PC-9 (cell line): ENCODE measurements at regions of chr5 and their contacts with region 1.

Region 1: DNA sequence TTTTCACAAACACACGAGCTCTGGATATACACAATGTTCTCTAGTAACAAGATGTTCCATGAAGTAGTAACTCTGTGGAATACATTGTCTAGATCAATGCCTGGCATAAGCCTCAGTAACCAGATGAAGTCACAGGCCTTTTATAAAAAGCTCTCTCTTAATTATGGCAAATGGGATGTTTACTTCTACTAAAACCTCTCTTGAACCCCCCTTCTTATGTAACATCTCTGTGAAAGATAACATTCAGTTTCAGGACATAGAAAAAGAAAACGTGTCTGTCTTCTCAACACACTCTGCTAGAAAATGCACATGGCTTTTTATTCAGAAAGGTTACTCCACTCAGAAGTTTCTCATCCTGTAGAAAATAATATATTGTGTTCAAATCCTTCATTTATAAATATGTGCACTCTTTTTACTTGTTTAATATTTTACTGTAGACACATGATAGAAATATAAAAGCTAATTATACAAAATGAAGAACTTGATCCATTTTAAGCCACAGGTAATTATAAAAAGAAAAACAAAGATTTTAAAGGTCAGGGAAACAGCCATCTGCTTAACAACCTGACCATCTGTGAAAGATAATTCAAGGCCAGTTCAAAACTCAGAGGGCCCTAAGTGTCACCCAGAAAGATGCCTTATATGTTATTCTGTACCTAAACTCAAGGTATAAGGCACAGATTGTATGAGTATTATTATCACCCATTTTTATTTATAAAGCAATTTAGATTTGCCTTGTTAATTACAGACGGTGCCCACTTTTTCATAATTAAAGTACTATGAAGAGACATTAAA is 812.0 kb downstream of the CDH18 start:
- DNase-seq: no peak
- H3K4me3 ChIP-seq: no peak overlapping the region
- H3K27ac ChIP-seq: no peak overlapping the region
- H3K4me1 ChIP-seq: no peaks in the 10 kb centered on the region
- H3K27me3 ChIP-seq: no peaks in the 10 kb centered on the region
- CTCF ChIP-seq: no peak

Region 2: GRCh38 chr5:19122923-19123322 is 53.0 kb before region 1 on chr5:
- CTCF ChIA-PET with region 1: no interaction called
- POLR2A ChIA-PET with region 1: no interaction called
- intact Hi-C with region 1: no loop called
- DNase-seq: no peak
- H3K4me3 ChIP-seq: no peak overlapping the region
- H3K27ac ChIP-seq: no peak overlapping the region
- H3K4me1 ChIP-seq: no peaks in the 10 kb centered on the region
- H3K27me3 ChIP-seq: no peaks in the 10 kb centered on the region
- CTCF ChIP-seq: no peak

Region 3: DNA sequence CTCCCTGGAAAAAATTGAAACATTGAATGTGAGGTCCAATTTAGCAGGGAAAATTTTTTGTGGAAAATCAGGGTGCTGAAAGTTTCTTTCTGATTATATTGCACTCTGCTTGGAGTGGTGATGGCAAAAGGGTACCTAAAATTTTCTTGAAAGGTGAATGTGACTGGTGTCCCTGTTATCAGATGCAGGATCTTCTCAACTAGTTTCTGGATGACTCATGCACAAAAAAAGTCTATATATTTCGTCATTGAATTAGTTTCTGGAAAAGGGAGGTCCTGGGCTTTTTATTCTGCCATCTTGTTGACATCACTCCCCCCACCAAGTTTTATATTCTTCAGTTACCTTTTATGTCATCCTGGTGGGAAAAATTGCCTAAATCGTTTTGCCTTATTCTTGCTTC is 16.2 kb after region 1 on chr5:
- CTCF ChIA-PET with region 1: interaction called, 10 read pairs
- POLR2A ChIA-PET with region 1: interaction called, 4 read pairs
- intact Hi-C with region 1: no loop called
- DNase-seq: no peak
- H3K4me3 ChIP-seq: no peak overlapping the region
- H3K27ac ChIP-seq: no peak overlapping the region
- H3K4me1 ChIP-seq: no peaks in the 10 kb centered on the region
- H3K27me3 ChIP-seq: no peaks in the 10 kb centered on the region
- CTCF ChIP-seq: no peak

Region 4: GRCh38 chr5:19301271-19301670 is 125.3 kb after region 1 on chr5:
- CTCF ChIA-PET with region 1: no interaction called
- POLR2A ChIA-PET with region 1: no interaction called
- intact Hi-C with region 1: no loop called
- DNase-seq: no peak
- H3K4me3 ChIP-seq: no peak overlapping the region
- H3K27ac ChIP-seq: no peak overlapping the region
- H3K4me1 ChIP-seq: no peaks in the 10 kb centered on the region
- H3K27me3 ChIP-seq: no peaks in the 10 kb centered on the region
- CTCF ChIP-seq: no peak